PC-3 (cell line): ENCODE measurements at regions of chrX and their contacts with region 1.

Region 1: DNA sequence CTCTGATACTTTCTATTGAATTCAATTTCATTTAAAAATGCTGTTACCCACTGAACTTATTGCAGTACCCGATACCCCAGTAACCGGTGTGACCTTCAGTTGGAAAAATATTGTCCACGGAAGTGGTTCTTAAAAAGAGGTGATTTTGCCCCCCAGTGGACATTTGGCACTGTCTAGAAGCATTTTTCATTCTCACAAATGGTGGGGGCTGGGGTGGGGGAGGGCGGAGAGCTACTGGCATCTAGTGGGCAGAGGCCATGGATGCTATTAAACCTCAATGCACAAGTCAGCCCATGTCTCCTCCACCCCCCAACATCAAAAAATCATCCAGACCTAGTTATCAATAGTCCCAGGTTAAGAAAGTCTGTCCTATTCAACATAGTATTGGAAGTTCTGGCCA is 19.6 kb upstream of the CHM start:
- DNase-seq: peak; percentile 12
- ATAC-seq: peak; percentile 24; the same call in 1 of the 2 replicates
- H3K4me3 ChIP-seq: no peak overlapping the region
- H3K27ac ChIP-seq: no peak overlapping the region
- H3K4me1 ChIP-seq: no peaks in the 10 kb centered on the region
- H3K27me3 ChIP-seq: no peaks in the 10 kb centered on the region
- CTCF ChIP-seq: peak; percentile 27; the same call in 1 of the 2 replicates

Region 2: GRCh38 chrX:85611926-85612325 is 455.1 kb before region 1 on chrX:
- CTCF ChIA-PET with region 1: no interaction called
- POLR2A ChIA-PET with region 1: no interaction called
- intact Hi-C with region 1: loop called (anchors 5 kb)
- DNase-seq: peak; percentile 42
- ATAC-seq: no peak
- H3K4me3 ChIP-seq: no peak overlapping the region
- H3K27ac ChIP-seq: no peak overlapping the region
- H3K4me1 ChIP-seq: no peaks in the 10 kb centered on the region
- H3K27me3 ChIP-seq: no peaks in the 10 kb centered on the region
- CTCF ChIP-seq: peak; percentile 59

Region 3: GRCh38 chrX:86014421-86014820 is 52.6 kb before region 1 on chrX:
- CTCF ChIA-PET with region 1: no interaction called
- POLR2A ChIA-PET with region 1: no interaction called
- intact Hi-C with region 1: no loop called
- DNase-seq: no peak
- ATAC-seq: no peak
- H3K4me3 ChIP-seq: no peak overlapping the region
- H3K27ac ChIP-seq: no peak overlapping the region
- H3K4me1 ChIP-seq: no peaks in the 10 kb centered on the region
- H3K27me3 ChIP-seq: no peaks in the 10 kb centered on the region
- CTCF ChIP-seq: no peak

Region 4: GRCh38 chrX:86103061-86103460 is 36.1 kb after region 1 on chrX:
- CTCF ChIA-PET with region 1: no interaction called
- POLR2A ChIA-PET with region 1: no interaction called
- intact Hi-C with region 1: no loop called
- DNase-seq: no peak
- ATAC-seq: no peak
- H3K4me3 ChIP-seq: no peak overlapping the region
- H3K27ac ChIP-seq: no peak overlapping the region
- H3K4me1 ChIP-seq: no peaks in the 10 kb centered on the region
- H3K27me3 ChIP-seq: no peaks in the 10 kb centered on the region
- CTCF ChIP-seq: no peak